Ovary (tissue), 10 donors: ENCODE measurements at regions of chr4 and their contacts with region 1.

Region 1: DNA sequence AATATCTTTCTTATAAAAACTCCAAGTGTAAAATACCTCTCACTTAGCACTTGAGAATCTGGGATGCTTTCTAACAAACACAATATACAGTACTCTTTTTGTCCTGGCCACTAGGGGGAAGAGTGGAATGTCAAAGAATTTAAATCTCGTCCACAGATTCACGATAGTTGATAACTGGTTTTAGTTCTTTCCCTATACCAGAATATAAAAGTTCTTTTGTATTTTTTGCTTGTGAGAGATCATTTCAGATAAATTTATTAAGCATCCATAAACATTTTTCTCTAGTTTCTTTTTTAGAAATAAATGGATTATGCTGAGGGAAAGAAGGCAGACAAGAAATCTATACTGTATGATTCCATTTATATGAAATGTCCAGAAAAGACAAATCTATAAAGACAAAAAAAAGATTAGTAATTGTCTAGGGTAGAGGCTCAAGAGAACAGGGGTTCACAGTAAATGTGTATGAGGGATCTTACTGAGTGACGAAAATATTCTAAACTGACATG is 50.4 kb downstream of the MGARP start:
- DNase-seq: no peak
- H3K4me3 ChIP-seq: no peak overlapping the region
- H3K27ac ChIP-seq: no peak overlapping the region
- H3K4me1 ChIP-seq: no peaks in the 10 kb centered on the region
- H3K27me3 ChIP-seq: no peaks in the 10 kb centered on the region
- CTCF ChIP-seq: peak; percentile 39 to 79 (median 77)
- EP300 ChIP-seq: no peak
- POLR2A ChIP-seq: no peak

Region 2: DNA sequence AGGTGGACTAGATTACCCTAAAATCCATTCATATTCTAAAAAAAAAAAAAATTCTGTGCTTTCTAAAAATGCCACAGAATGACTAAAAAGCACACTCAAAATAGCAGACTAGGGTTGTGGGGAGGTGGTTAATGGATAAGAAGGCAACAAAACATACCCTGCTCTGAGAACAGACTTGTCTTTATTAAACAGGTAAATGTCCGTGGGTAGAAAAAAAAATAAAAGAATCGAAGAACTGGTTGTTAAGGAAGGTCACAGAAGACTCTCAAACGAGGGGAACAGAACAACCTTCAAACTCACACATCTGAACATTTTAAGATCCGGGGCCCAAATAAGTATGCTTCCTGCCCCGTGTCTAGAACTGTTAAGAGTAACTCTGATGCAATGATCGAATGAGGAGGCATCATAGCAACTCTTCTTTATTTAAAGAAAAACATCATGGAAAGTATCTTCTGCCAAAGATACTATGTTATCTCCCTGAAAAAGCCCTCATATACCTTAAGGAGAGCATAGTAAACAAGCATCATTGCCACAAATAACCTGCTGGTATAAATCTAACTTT is 120.9 kb before region 1 on chr4:
- intact Hi-C with region 1: no loop called
- DNase-seq: no peak
- H3K4me3 ChIP-seq: no peak overlapping the region
- H3K27ac ChIP-seq: no peak overlapping the region
- H3K4me1 ChIP-seq: no peaks in the 10 kb centered on the region
- H3K27me3 ChIP-seq: no peaks in the 10 kb centered on the region
- CTCF ChIP-seq: no peak
- EP300 ChIP-seq: no peak
- POLR2A ChIP-seq: no peak

Region 3: GRCh38 chr4:139153420-139154133 is 76.0 kb before region 1 on chr4:
- intact Hi-C with region 1: no loop called
- DNase-seq: no peak
- H3K4me3 ChIP-seq: no peak overlapping the region
- H3K27ac ChIP-seq: no peak overlapping the region
- H3K4me1 ChIP-seq: no peaks in the 10 kb centered on the region
- H3K27me3 ChIP-seq: no peaks in the 10 kb centered on the region
- CTCF ChIP-seq: no peak
- EP300 ChIP-seq: no peak
- POLR2A ChIP-seq: no peak

Region 4: DNA sequence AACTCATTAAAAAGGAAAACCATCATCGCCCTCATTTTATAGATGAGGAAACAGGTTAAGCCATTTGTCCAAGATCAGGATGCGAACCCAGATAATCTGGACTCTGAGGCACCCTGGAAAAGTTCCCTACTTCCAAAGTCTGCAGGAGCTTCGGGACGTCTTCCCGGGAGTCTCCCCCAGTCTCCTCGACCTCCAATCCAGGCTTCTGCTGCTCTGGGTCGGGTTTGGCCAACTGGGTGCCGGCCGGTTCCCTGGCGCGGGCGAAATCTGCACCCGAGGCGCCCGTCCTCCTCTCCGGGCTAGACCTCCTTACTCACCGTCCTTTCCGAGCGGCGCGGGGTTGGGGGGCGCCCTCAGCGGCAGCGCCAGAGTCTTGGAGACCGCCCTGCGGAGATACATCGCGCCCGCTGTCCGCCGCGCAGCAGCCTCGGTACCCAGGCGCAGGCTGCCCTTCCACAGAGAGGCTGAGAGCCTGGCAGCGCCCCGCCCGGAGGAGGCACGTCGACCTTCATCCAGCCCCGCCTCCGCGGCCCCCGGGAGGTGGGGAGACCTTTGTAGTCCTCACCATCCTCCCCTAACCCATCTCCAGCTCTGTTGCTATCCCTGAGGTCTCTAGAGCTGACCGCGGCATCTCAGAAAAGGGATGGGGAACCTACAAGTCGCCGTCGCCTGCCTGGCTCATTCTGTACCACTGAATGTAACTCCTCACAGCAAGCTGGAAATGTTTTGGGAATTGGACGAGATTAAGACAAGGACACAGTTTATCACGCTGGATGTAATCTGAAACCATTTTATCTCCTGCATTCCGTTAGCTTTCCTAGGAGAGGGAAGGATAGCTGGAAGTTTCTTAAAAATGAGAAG is 50.4 kb after region 1 on chr4 and contains the start of gene MGARP:
- intact Hi-C with region 1: loop called in 1 of 4 experiments (anchors 10 kb)
- DNase-seq: peak; percentile 43 to 69 (median 59)
- H3K4me3 ChIP-seq: peak within 1 kb of the TSS; percentile 58
- H3K27ac ChIP-seq: peak within 1 kb of the TSS; percentile 18 to 78
- H3K4me1 ChIP-seq: peaks cover 5% of the 10 kb centered on the region
- H3K27me3 ChIP-seq: no peaks in the 10 kb centered on the region
- CTCF ChIP-seq: no peak
- EP300 ChIP-seq: no peak
- POLR2A ChIP-seq: peak; percentile 24
- total RNA-seq, gene MGARP: 11.4 to 26.1 (median 18.3) TPM

Region 5: GRCh38 chr4:139470997-139471665 is 241.5 kb after region 1 on chr4:
- intact Hi-C with region 1: no loop called
- DNase-seq: no peak
- H3K4me3 ChIP-seq: no peak overlapping the region
- H3K27ac ChIP-seq: no peak overlapping the region
- H3K4me1 ChIP-seq: no peaks in the 10 kb centered on the region
- H3K27me3 ChIP-seq: no peaks in the 10 kb centered on the region
- CTCF ChIP-seq: no peak
- EP300 ChIP-seq: no peak
- POLR2A ChIP-seq: no peak